Endothelial cell of umbilical vein (primary cell): ENCODE measurements at regions of chr2 and their contacts with region 1.

Region 1: DNA sequence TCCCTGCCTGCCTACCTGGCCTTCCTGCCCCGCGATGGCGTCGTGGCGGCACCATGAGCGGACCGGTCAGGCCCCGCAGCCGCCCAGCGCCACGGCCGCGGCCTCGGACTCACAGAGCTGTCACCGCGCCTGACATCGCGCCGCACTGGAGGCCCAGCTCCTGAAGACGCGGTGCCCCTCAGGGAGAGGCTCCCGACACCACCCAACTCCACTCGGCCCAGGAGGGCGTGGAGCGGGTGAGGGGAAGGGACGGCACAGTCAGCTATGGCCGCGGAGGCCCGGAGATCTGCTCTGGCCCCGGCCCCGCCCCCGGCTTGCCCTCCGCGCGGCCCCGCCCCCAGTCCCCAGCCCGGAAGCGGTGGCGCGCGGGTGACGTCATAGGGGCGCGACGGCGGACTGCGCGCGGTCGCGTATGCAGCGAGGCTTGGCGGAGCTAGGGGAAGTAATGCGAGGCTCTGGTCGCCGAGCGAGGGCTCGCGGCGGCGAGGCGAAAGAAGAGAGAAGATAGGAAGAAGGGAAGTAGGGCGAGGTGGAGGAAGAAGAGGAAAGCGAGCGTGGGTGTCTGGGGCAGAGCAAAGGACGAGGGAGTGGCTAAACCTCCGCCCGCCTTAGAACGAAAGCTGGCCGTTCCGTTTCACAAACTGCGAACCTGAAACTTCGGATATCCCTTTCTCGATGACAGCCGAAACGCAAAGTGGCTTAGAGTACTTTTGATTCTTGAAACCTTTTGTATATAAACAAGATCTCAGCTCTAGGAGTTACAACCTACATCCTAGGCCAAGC is at the start of gene SLC35F5:
- DNase-seq: peak; percentile 92
- H3K4me3 ChIP-seq: peak within 1 kb of the TSS; percentile 91 to 97 (median 96)
- H3K27ac ChIP-seq: peak within 1 kb of the TSS; percentile 75
- H3K4me1 ChIP-seq: peaks cover 30% of the 10 kb centered on the region
- H3K27me3 ChIP-seq: no peaks in the 10 kb centered on the region
- CTCF ChIP-seq: no peak
- POLR2A ChIP-seq: peak; percentile 92
- total RNA-seq, gene SLC35F5: 46.6 and 51.1 TPM in 2 replicates

Region 2: GRCh38 chr2:113602869-113603466 is 153.6 kb before region 1 on chr2:
- CTCF ChIA-PET with region 1: interaction called, 6 read pairs
- POLR2A ChIA-PET with region 1: no interaction called
- dilution Hi-C with region 1: no loop called
- intact Hi-C with region 1: loop called (anchors 5 kb)
- DNase-seq: no peak
- H3K4me3 ChIP-seq: peak overlapping the region; percentile 35 to 54 (median 38)
- H3K27ac ChIP-seq: no peak overlapping the region
- H3K4me1 ChIP-seq: no peaks in the 10 kb centered on the region
- H3K27me3 ChIP-seq: peaks cover 0 to 2% of the 10 kb centered on the region in 2 experiments
- CTCF ChIP-seq: no peak
- POLR2A ChIP-seq: no peak

Region 3: DNA sequence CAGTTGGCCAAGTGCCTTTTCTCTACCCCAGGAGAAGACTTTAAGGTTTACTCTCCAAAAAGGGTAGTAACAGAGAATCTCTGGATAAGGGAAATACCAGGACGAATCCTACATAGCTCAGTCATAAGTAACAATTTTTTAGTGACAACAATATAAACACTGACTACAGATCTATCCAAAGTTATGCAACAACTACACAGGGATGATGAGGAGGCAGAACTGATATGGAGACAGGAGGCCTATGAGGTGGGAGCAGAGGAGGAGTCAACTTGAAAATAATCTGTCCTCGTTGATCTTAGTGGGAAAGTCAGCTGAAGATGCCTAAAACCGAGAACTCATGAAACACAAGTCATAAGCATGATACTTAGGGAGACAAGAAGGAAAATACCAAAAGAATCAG is 40.3 kb before region 1 on chr2:
- CTCF ChIA-PET with region 1: interaction called, 3 read pairs
- POLR2A ChIA-PET with region 1: no interaction called
- dilution Hi-C with region 1: no loop called
- intact Hi-C with region 1: loop called (anchors 1 kb)
- DNase-seq: no peak
- H3K4me3 ChIP-seq: no peak overlapping the region
- H3K27ac ChIP-seq: no peak overlapping the region
- H3K4me1 ChIP-seq: no peaks in the 10 kb centered on the region
- H3K27me3 ChIP-seq: no peaks in the 10 kb centered on the region
- CTCF ChIP-seq: no peak
- POLR2A ChIP-seq: no peak

Region 4: DNA sequence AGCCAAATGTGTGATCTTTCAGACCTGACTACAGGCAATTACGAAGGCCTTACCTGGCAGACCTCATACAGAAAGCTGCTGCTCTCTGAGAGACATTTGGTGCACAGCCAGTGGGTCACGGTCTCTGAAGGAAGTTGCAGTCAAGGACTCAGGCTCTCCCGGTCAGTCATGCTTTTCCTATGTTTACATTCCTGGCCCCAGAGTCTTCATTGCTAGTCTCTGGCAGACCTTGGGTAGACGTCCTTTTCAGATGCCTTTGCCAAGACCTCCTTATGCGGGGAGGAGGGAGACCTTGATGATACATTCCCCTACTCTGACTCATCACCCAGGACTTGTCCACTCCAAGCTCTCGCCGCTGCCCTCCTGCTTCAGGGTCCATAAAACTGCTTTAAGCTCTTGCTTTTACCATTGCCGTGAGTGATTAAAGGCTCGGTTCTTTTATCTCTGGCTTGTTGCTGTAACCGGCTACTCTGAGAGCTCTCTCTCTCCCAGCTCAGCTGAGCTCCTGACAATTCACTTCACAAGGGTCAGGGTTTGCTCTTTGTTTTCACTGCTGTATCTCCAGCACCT is 61.9 kb after region 1 on chr2:
- CTCF ChIA-PET with region 1: interaction called, 10 read pairs
- POLR2A ChIA-PET with region 1: no interaction called
- dilution Hi-C with region 1: no loop called
- intact Hi-C with region 1: loop called (anchors 1 kb)
- DNase-seq: peak; percentile 81
- H3K4me3 ChIP-seq: no peak overlapping the region
- H3K27ac ChIP-seq: no peak overlapping the region
- H3K4me1 ChIP-seq: peaks cover 11% of the 10 kb centered on the region
- H3K27me3 ChIP-seq: no peaks in the 10 kb centered on the region
- CTCF ChIP-seq: no peak
- POLR2A ChIP-seq: no peak

Region 5: DNA sequence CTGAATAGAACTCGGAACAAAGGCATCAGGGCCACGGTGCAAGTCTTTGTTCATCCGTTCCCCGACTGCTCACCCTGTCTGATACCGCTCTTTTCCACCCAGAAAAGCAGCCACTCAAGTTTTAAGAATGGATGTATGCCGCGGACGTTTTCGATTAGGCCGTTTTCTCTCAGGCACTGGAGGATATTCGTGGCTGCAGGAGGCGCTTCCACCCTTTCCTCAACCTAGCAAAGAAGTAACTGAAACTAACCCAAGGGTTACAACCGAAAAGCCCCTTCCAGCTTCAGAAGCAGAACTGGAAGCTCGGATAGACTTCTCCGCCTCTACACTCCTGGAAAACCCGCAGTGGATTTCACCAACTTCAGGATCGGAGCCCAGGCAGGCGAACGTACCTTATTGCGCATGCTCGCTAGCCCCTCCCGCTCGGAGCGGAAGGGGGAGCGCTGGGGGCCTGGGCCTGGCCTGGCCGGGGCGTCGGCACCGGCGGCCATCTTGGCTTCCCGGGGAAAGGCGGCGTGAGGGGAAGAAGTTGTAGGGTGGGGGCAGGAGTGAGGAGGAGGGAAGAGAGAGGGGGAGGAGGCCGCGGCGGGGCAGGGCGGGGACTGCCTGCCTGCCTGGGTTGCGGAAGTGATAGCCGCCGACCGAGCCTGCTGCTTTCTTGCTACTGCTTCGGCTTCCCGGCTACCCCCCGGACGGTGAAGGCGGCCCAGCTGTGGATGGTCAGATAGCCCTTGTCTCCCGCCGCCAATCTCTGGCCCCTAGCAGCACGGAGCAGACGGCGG is 133.1 kb after region 1 on chr2 and contains the start of gene ACTR3:
- CTCF ChIA-PET with region 1: interaction called, 7 read pairs
- POLR2A ChIA-PET with region 1: interaction called, 9 read pairs
- dilution Hi-C with region 1: no loop called
- intact Hi-C with region 1: loop called (anchors 1 kb)
- DNase-seq: peak; percentile 100
- H3K4me3 ChIP-seq: peak within 1 kb of the TSS; percentile 99 to 100 (median 99)
- H3K27ac ChIP-seq: peak within 1 kb of the TSS; percentile 83
- H3K4me1 ChIP-seq: peaks cover 47% of the 10 kb centered on the region
- H3K27me3 ChIP-seq: no peaks in the 10 kb centered on the region
- CTCF ChIP-seq: peak in 1 of 2 donors; percentile 9
- POLR2A ChIP-seq: peak; percentile 89
- total RNA-seq, gene ACTR3: 374 and 401 TPM in 2 replicates

Region 6: GRCh38 chr2:113965644-113966043 is 209.1 kb after region 1 on chr2:
- CTCF ChIA-PET with region 1: no interaction called
- POLR2A ChIA-PET with region 1: no interaction called
- dilution Hi-C with region 1: no loop called
- intact Hi-C with region 1: loop called (anchors 5 kb)
- DNase-seq: peak; percentile 66
- H3K4me3 ChIP-seq: no peak overlapping the region
- H3K27ac ChIP-seq: peak overlapping the region; percentile 49
- H3K4me1 ChIP-seq: peaks cover 15% of the 10 kb centered on the region
- H3K27me3 ChIP-seq: no peaks in the 10 kb centered on the region
- CTCF ChIP-seq: peak; percentile 51 to 56
- POLR2A ChIP-seq: peak; percentile 21